ENCODE measurements at regions of chr12 and their contacts with region 1.

Region 1: DNA sequence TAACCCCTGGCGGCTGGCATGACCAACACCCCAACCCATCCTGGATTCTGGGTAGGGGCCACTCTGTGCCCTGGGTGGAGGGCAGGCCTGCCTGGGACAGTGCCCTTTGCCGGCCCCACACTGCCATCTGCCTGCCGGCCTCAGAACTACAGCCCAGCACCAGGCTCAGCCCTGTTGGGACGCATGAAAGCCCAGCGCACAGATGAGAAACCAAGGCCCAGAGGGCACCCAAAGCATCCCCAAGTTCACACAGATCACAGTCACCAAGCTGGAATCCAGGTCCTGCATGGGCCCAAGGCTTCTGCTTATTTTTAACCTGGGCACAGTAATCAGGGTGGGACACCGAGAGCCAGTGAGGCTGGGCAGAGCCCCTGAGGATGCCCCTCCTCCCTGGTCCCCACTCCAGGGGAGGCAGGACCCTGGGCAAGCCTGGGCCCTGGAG is 26.2 kb downstream of the RFLNA start:
- DNase-seq: peak; percentile 42 to 92 (median 65)
- ATAC-seq: peak; percentile 93
- H3K4me3 ChIP-seq: no peak overlapping the region
- H3K27ac ChIP-seq: no peak overlapping the region
- H3K4me1 ChIP-seq: no peaks in the 10 kb centered on the region
- H3K27me3 ChIP-seq: no peaks in the 10 kb centered on the region
- CTCF ChIP-seq: peak; percentile 88 to 94

Region 2: DNA sequence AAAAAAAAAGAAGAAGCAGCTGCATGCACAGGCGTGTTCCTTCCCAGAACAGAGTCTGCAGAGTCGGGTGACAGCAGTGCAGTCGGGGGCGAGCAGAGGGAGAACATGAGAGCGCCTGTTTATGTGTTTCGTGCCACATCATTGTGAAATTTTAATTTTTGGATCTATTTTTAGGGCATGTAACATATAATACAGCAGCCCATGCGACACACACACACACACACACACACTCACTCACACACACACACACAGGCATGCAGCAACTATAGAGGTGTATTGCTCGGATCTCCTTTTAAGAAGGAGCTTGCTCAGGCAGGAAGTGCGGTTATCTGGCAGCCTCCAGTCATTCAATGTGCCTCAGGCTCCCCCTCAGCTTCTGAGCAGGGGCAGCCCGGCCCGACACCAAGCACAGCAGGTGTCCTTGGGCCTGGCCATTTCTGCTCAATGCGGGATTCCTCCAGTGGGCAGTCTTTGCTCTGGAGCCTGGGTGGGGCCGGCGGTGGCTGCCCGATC is 276.2 kb before region 1 on chr12:
- intact Hi-C with region 1: loop called in 1 of 2 experiments (anchors 5 kb)
- DNase-seq: peak in 1 of 4 donors; percentile 39
- ATAC-seq: no peak
- H3K4me3 ChIP-seq: no peak overlapping the region
- H3K27ac ChIP-seq: no peak overlapping the region
- H3K4me1 ChIP-seq: peaks cover 0 to 10% of the 10 kb centered on the region in 2 donors
- H3K27me3 ChIP-seq: no peaks in the 10 kb centered on the region
- CTCF ChIP-seq: no peak

Region 3: GRCh38 chr12:124053851-124054250 is 267.2 kb before region 1 on chr12:
- intact Hi-C with region 1: loop called in 1 of 2 experiments (anchors 5 kb)
- DNase-seq: peak in 3 of 4 donors; percentile 59 to 89 (median 68)
- ATAC-seq: peak; percentile 96
- H3K4me3 ChIP-seq: no peak overlapping the region
- H3K27ac ChIP-seq: no peak overlapping the region
- H3K4me1 ChIP-seq: peaks cover 0 to 10% of the 10 kb centered on the region in 2 donors
- H3K27me3 ChIP-seq: no peaks in the 10 kb centered on the region
- CTCF ChIP-seq: peak; percentile 42 to 66

Measured in left lung (tissue), 14 donors.